ENCODE measurements at regions of chr7 and their contacts with region 1.

Region 1: DNA sequence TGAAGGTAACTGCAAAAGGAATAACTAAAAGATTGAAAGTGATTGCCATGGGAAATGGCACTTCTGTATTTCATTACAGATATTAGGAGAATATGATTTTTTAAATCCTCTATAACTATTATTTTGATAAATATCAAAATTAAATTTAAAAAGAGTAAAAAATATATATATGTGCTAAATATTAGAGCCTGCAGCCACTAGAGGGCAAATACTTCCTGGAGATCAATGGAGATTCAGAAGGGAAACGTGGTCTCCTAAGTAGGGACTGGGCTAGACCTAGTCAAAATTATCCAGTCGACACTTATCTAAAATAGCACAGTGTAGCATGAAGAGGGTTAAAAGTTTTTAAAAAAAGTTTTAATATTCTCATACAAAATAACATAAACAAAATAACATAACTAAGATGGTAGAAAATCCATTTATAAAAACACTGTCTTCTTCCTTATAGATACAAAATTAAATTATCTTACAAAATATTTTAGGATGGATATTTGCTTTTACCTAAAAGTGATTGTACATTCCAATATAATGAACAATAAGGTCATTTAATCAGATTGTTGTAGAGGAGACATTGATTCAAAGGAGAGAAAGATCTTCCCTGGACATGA is 434.3 kb downstream of the MDFIC start:
- DNase-seq: peak; percentile 37
- ATAC-seq: no peak
- H3K4me3 ChIP-seq: no peak overlapping the region
- H3K4me3 Mint-ChIP-seq: no peak overlapping the region
- H3K27ac ChIP-seq: no peak overlapping the region
- H3K27ac Mint-ChIP-seq: no peak overlapping the region
- H3K4me1 ChIP-seq: peaks cover 0 to 6% of the 10 kb centered on the region in 2 donors
- H3K4me1 Mint-ChIP-seq: peaks cover 12% of the 10 kb centered on the region
- H3K27me3 ChIP-seq: no peaks in the 10 kb centered on the region
- H3K27me3 Mint-ChIP-seq: peaks cover 5% of the 10 kb centered on the region
- CTCF ChIP-seq: peak; percentile 72

Region 2: DNA sequence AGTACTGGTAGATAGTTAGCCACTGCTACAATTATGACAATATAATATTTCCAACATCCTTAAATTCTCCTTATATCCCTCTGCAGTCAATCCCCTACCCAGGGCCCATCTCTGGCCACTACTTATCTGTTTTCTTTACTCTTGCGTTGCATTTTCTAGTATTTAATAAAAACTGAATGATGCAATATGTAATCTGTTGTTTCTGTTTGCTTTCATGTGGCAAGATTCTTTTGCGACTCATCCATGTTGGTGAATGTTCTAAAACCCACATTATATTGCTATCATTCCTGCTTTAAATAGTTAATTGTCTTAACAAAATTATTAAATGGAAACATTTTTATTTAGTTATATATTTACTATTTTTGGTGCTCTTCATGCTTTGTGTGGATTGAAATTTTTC is 95.9 kb before region 1 on chr7:
- CTCF ChIA-PET with region 1: no interaction called
- POLR2A ChIA-PET with region 1: no interaction called
- intact Hi-C with region 1: no loop called
- DNase-seq: no peak
- ATAC-seq: no peak
- H3K4me3 ChIP-seq: no peak overlapping the region
- H3K4me3 Mint-ChIP-seq: no peak overlapping the region
- H3K27ac ChIP-seq: no peak overlapping the region
- H3K27ac Mint-ChIP-seq: no peak overlapping the region
- H3K4me1 ChIP-seq: no peaks in the 10 kb centered on the region
- H3K4me1 Mint-ChIP-seq: no peaks in the 10 kb centered on the region
- H3K27me3 ChIP-seq: no peaks in the 10 kb centered on the region
- H3K27me3 Mint-ChIP-seq: peaks cover 3% of the 10 kb centered on the region
- CTCF ChIP-seq: no peak

Region 3: GRCh38 chr7:115449689-115450088 is 93.4 kb after region 1 on chr7:
- CTCF ChIA-PET with region 1: interaction called, 3 read pairs
- POLR2A ChIA-PET with region 1: no interaction called
- intact Hi-C with region 1: loop called (anchors 5 kb)
- DNase-seq: peak; percentile 47
- ATAC-seq: no peak
- H3K4me3 ChIP-seq: no peak overlapping the region
- H3K4me3 Mint-ChIP-seq: no peak overlapping the region
- H3K27ac ChIP-seq: no peak overlapping the region
- H3K27ac Mint-ChIP-seq: no peak overlapping the region
- H3K4me1 ChIP-seq: no peaks in the 10 kb centered on the region
- H3K4me1 Mint-ChIP-seq: no peaks in the 10 kb centered on the region
- H3K27me3 ChIP-seq: peaks cover 0 to 6% (median 0%) of the 10 kb centered on the region in 4 experiments
- H3K27me3 Mint-ChIP-seq: peaks cover 22% of the 10 kb centered on the region
- CTCF ChIP-seq: no peak

Region 4: GRCh38 chr7:115475761-115476385 is 119.6 kb after region 1 on chr7:
- CTCF ChIA-PET with region 1: interaction called, 4 read pairs
- POLR2A ChIA-PET with region 1: no interaction called
- intact Hi-C with region 1: loop called (anchors 1 kb)
- DNase-seq: peak; percentile 39
- ATAC-seq: no peak
- H3K4me3 ChIP-seq: no peak overlapping the region
- H3K4me3 Mint-ChIP-seq: no peak overlapping the region
- H3K27ac ChIP-seq: no peak overlapping the region
- H3K27ac Mint-ChIP-seq: no peak overlapping the region
- H3K4me1 ChIP-seq: peaks cover 12 to 16% of the 10 kb centered on the region in 2 donors
- H3K4me1 Mint-ChIP-seq: peaks cover 11% of the 10 kb centered on the region
- H3K27me3 ChIP-seq: peaks cover 0 to 27% (median 13%) of the 10 kb centered on the region in 4 experiments
- H3K27me3 Mint-ChIP-seq: peaks cover 39% of the 10 kb centered on the region
- CTCF ChIP-seq: peak; percentile 28

Measured in B cell (primary cell).